GM23248 (cell line): ENCODE measurements at regions of chrX and their contacts with region 1.

Region 1: DNA sequence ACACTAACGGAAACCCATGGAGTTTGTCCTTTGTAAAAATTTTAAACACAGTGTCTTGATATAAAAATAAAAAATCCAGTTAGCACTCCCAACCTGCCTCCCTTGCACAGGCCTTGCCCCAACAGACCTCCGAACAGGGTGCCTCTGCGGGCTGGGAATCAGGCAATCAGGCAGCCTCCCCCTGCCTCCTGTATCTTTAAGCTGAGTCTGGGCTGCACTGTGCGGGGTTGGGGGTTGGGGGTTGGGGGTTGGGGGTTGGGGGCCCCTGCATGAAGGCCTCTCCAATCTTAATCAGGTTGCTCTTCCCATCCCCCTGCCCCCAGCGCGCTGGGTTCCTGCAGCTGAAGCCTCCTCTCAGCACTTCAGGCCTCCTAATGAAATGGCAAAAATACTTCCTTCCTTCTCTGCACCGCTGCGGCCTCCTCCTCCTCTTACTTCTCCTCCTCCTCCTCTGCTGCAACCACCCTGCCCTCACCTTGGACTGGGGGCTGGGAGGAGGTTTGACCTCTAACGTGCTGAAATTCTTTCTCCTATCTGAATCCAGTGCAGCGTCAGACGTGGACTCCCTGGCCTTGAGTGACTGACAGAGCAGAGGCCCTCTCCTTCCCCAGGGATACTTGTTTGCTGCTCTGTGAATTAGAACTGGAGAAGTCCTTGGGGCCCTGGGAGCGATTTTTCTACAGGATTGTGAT is 26.6 kb downstream of the NLGN3 start:
- DNase-seq: no peak
- H3K4me3 ChIP-seq: no peak overlapping the region
- H3K27ac ChIP-seq: no peak overlapping the region
- H3K4me1 ChIP-seq: no peaks in the 10 kb centered on the region
- H3K27me3 ChIP-seq: no peaks in the 10 kb centered on the region

Region 2: GRCh38 chrX:70998411-70999027 is 172.7 kb before region 1 on chrX:
- in situ Hi-C with region 1: loop called (anchors 25 kb)
- DNase-seq: peak; percentile 30
- H3K4me3 ChIP-seq: no peak overlapping the region
- H3K27ac ChIP-seq: no peak overlapping the region
- H3K4me1 ChIP-seq: no peaks in the 10 kb centered on the region
- H3K27me3 ChIP-seq: no peaks in the 10 kb centered on the region